Naive thymus-derived CD4-positive, alpha-beta T cell (primary cell): ENCODE measurements at regions of chr13 and their contacts with region 1.

Region 1: GRCh38 chr13:29935309-29935981 is 85.0 kb upstream of the UBL3 start:
- DNase-seq: peak; percentile 38 to 84 (median 77)
- ATAC-seq: peak; percentile 93
- H3K4me3 ChIP-seq: peak overlapping the region; percentile 61
- H3K4me3 Mint-ChIP-seq: peak overlapping the region; percentile 67 to 95 (median 91)
- H3K27ac ChIP-seq: peak overlapping the region; percentile 71
- H3K27ac Mint-ChIP-seq: peak overlapping the region; percentile 81 to 96 (median 93)
- H3K4me1 ChIP-seq: peaks cover 38 to 43% of the 10 kb centered on the region in 2 donors
- H3K4me1 Mint-ChIP-seq: peaks cover 32 to 53% (median 51%) of the 10 kb centered on the region in 7 donors
- H3K27me3 ChIP-seq: no peaks in the 10 kb centered on the region
- H3K27me3 Mint-ChIP-seq: no peaks in the 10 kb centered on the region

Region 2: GRCh38 chr13:29595380-29596063 is 339.9 kb before region 1 on chr13 and contains the start of gene SLC7A1:
- CTCF ChIA-PET with region 1: no interaction called
- POLR2A ChIA-PET with region 1: no interaction called
- intact Hi-C with region 1: loop called (anchors 1 to 10 kb)
- DNase-seq: peak; percentile 74 to 93 (median 85)
- ATAC-seq: peak; percentile 95
- H3K4me3 ChIP-seq: peak within 1 kb of the TSS; percentile 73
- H3K4me3 Mint-ChIP-seq: peak within 1 kb of the TSS; percentile 88 to 94 (median 90)
- H3K27ac ChIP-seq: peak within 1 kb of the TSS; percentile 82
- H3K27ac Mint-ChIP-seq: peak within 1 kb of the TSS; percentile 74 to 96 (median 87)
- H3K4me1 ChIP-seq: peaks cover 6 to 7% of the 10 kb centered on the region in 2 donors
- H3K4me1 Mint-ChIP-seq: peaks cover 26 to 49% (median 43%) of the 10 kb centered on the region in 7 donors
- H3K27me3 ChIP-seq: no peaks in the 10 kb centered on the region
- H3K27me3 Mint-ChIP-seq: peaks cover 0 to 3% (median 2%) of the 10 kb centered on the region in 5 donors
- total RNA-seq, gene SLC7A1: 12.2 to 63.8 (median 28.2) TPM

Region 3: GRCh38 chr13:29902101-29902952 is 33.1 kb before region 1 on chr13:
- CTCF ChIA-PET with region 1: interaction called, 5 read pairs
- POLR2A ChIA-PET with region 1: interaction called, 7 read pairs
- intact Hi-C with region 1: loop called in 1 of 2 experiments (anchors 1 kb)
- DNase-seq: peak in 8 of 9 donors; percentile 2 to 40 (median 24)
- ATAC-seq: peak; percentile 84
- H3K4me3 ChIP-seq: peak overlapping the region; percentile 46
- H3K4me3 Mint-ChIP-seq: peak overlapping the region; percentile 69 to 95 (median 82)
- H3K27ac ChIP-seq: no peak overlapping the region
- H3K27ac Mint-ChIP-seq: peak overlapping the region; percentile 1 to 94 (median 74)
- H3K4me1 ChIP-seq: peaks cover 13 to 22% of the 10 kb centered on the region in 2 donors
- H3K4me1 Mint-ChIP-seq: peaks cover 8 to 25% (median 22%) of the 10 kb centered on the region in 7 donors
- H3K27me3 ChIP-seq: no peaks in the 10 kb centered on the region
- H3K27me3 Mint-ChIP-seq: peaks cover 0 to 29% (median 0%) of the 10 kb centered on the region in 5 donors

Region 4: GRCh38 chr13:29954082-29955028 is 18.9 kb after region 1 on chr13:
- CTCF ChIA-PET with region 1: interaction called, 30 read pairs
- POLR2A ChIA-PET with region 1: interaction called, 114 read pairs
- intact Hi-C with region 1: loop called (anchors 1 kb)
- DNase-seq: peak in 8 of 9 donors; percentile 33 to 77 (median 70)
- ATAC-seq: peak; percentile 79
- H3K4me3 ChIP-seq: peak overlapping the region; percentile 43
- H3K4me3 Mint-ChIP-seq: peak overlapping the region; percentile 72 to 90 (median 84)
- H3K27ac ChIP-seq: peak overlapping the region; percentile 69
- H3K27ac Mint-ChIP-seq: peak overlapping the region; percentile 79 to 94 (median 89)
- H3K4me1 ChIP-seq: peaks cover 20 to 30% of the 10 kb centered on the region in 2 donors
- H3K4me1 Mint-ChIP-seq: peaks cover 22 to 81% (median 53%) of the 10 kb centered on the region in 7 donors
- H3K27me3 ChIP-seq: no peaks in the 10 kb centered on the region
- H3K27me3 Mint-ChIP-seq: peaks cover 0 to 15% (median 0%) of the 10 kb centered on the region in 5 donors

Region 5: DNA sequence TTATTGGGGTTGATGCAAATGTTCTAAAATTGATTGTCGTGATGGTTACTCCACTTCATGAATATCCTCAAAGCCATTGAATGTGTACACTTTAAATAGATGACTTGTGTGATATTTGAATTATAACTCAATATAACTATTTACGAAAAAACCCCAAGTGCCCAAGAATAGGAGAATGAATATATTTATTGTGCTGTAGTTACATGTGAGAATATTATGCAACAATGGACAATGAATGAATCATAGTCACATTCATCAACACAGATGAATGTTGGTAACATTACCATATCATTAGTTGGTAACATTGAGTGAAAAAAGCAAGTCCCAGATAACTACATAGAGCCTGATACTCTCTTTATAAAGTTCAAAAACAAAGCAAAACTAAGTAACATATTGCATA is 42.8 kb after region 1 on chr13:
- CTCF ChIA-PET with region 1: no interaction called
- POLR2A ChIA-PET with region 1: no interaction called
- intact Hi-C with region 1: loop called (anchors 5 kb)
- DNase-seq: no peak
- ATAC-seq: no peak
- H3K4me3 ChIP-seq: no peak overlapping the region
- H3K4me3 Mint-ChIP-seq: no peak overlapping the region
- H3K27ac ChIP-seq: no peak overlapping the region
- H3K27ac Mint-ChIP-seq: no peak overlapping the region
- H3K4me1 ChIP-seq: no peaks in the 10 kb centered on the region
- H3K4me1 Mint-ChIP-seq: peaks cover 0 to 10% (median 0%) of the 10 kb centered on the region in 7 donors
- H3K27me3 ChIP-seq: no peaks in the 10 kb centered on the region
- H3K27me3 Mint-ChIP-seq: peaks cover 0 to 13% (median 0%) of the 10 kb centered on the region in 5 donors

Region 6: GRCh38 chr13:29991343-29991742 is 55.9 kb after region 1 on chr13:
- CTCF ChIA-PET with region 1: no interaction called
- POLR2A ChIA-PET with region 1: no interaction called
- intact Hi-C with region 1: no loop called
- DNase-seq: no peak
- ATAC-seq: no peak
- H3K4me3 ChIP-seq: no peak overlapping the region
- H3K4me3 Mint-ChIP-seq: no peak overlapping the region
- H3K27ac ChIP-seq: no peak overlapping the region
- H3K27ac Mint-ChIP-seq: no peak overlapping the region
- H3K4me1 ChIP-seq: no peaks in the 10 kb centered on the region
- H3K4me1 Mint-ChIP-seq: peaks cover 0 to 3% (median 0%) of the 10 kb centered on the region in 7 donors
- H3K27me3 ChIP-seq: no peaks in the 10 kb centered on the region
- H3K27me3 Mint-ChIP-seq: peaks cover 0 to 7% (median 0%) of the 10 kb centered on the region in 5 donors